Naive thymus-derived CD4-positive, alpha-beta T cell (primary cell): ENCODE measurements at regions of chr15 and their contacts with region 1.

Region 1: DNA sequence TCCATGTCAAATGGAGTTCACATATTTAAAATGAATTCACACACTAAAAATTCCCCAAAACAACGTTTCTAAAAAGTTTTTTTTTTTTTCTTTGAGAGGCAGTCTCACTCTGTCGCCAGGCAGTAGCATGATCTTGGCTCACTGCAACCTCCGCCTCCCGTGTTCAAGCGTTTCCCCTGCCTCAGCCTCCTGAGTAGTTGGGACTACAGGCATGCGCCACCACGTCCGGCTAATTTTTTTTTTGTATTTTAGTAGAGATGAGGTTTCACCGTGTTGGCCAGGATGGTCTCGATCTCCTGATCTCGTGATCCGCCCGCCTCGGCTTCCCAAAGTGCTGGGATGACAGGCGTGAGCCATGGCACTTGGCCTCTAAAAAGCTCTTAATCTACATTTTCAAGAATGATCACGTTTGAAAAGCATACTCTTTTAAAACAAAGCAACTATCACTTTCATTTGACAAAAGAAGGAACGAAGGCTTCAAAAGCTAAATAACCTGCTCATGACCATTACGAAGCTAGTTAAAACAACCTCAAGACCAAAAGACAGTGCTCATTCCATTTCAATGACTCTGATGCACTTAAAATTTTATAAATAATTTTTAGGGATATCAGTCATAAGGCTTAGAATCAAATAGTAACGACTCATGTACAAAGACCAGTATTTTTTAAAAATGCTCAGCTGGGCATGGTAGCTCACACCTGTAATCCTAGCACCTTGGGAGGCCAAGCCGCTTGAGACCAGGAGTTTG is 5.5 kb downstream of the UBE3A start:
- DNase-seq: no peak
- ATAC-seq: no peak
- H3K4me3 ChIP-seq: no peak overlapping the region
- H3K4me3 Mint-ChIP-seq: peak overlapping the region in 6 of 10 donors; percentile 4 to 60 (median 34)
- H3K27ac ChIP-seq: no peak overlapping the region
- H3K27ac Mint-ChIP-seq: peak overlapping the region in 2 of 9 donors; percentile 3 to 17
- H3K4me1 ChIP-seq: peaks cover 32 to 52% of the 10 kb centered on the region in 2 donors
- H3K4me1 Mint-ChIP-seq: peaks cover 42 to 94% (median 72%) of the 10 kb centered on the region in 7 donors
- H3K27me3 ChIP-seq: no peaks in the 10 kb centered on the region
- H3K27me3 Mint-ChIP-seq: no peaks in the 10 kb centered on the region

Region 2: DNA sequence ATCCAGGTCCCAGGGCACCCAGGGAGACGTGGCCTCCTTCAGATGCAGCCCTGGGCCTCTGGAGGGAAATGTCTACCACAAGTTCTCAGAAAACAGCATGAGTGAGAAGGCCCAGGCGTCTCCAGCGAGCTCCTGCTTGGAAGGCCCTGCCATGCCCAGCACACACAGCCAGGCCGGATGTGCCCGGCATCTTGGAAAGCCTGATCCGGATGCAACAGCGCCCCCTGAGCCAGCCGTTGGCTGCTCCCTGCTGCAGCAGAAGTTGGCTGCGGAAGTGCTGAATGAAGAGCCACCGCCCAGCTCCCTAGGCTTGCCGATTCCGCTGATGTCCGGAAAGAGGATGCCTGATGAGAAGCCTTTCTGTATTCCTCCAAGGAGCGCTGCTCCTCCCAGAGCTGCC is 756.9 kb before region 1 on chr15:
- CTCF ChIA-PET with region 1: no interaction called
- POLR2A ChIA-PET with region 1: no interaction called
- intact Hi-C with region 1: no loop called
- DNase-seq: no peak
- ATAC-seq: no peak
- H3K4me3 ChIP-seq: no peak overlapping the region
- H3K4me3 Mint-ChIP-seq: no peak overlapping the region
- H3K27ac ChIP-seq: no peak overlapping the region
- H3K27ac Mint-ChIP-seq: no peak overlapping the region
- H3K4me1 ChIP-seq: no peaks in the 10 kb centered on the region
- H3K4me1 Mint-ChIP-seq: no peaks in the 10 kb centered on the region
- H3K27me3 ChIP-seq: no peaks in the 10 kb centered on the region
- H3K27me3 Mint-ChIP-seq: peaks cover 0 to 9% (median 0%) of the 10 kb centered on the region in 5 donors

Region 3: GRCh38 chr15:25070357-25070963 is 362.8 kb before region 1 on chr15:
- CTCF ChIA-PET with region 1: no interaction called
- POLR2A ChIA-PET with region 1: no interaction called
- intact Hi-C with region 1: no loop called
- DNase-seq: no peak
- ATAC-seq: no peak
- H3K4me3 ChIP-seq: no peak overlapping the region
- H3K4me3 Mint-ChIP-seq: peak overlapping the region in 2 of 10 donors; percentile 25 to 33
- H3K27ac ChIP-seq: no peak overlapping the region
- H3K27ac Mint-ChIP-seq: no peak overlapping the region
- H3K4me1 ChIP-seq: no peaks in the 10 kb centered on the region
- H3K4me1 Mint-ChIP-seq: no peaks in the 10 kb centered on the region
- H3K27me3 ChIP-seq: no peaks in the 10 kb centered on the region
- H3K27me3 Mint-ChIP-seq: no peaks in the 10 kb centered on the region

Region 4: GRCh38 chr15:25415707-25416106 is 17.6 kb before region 1 on chr15:
- CTCF ChIA-PET with region 1: no interaction called
- POLR2A ChIA-PET with region 1: interaction called, 3 read pairs
- intact Hi-C with region 1: loop called in 1 of 2 experiments (anchors 2 kb)
- DNase-seq: no peak
- ATAC-seq: no peak
- H3K4me3 ChIP-seq: no peak overlapping the region
- H3K4me3 Mint-ChIP-seq: peak overlapping the region in 2 of 10 donors; percentile 48 to 63
- H3K27ac ChIP-seq: no peak overlapping the region
- H3K27ac Mint-ChIP-seq: no peak overlapping the region
- H3K4me1 ChIP-seq: peaks cover 11 to 14% of the 10 kb centered on the region in 2 donors
- H3K4me1 Mint-ChIP-seq: peaks cover 21 to 97% (median 85%) of the 10 kb centered on the region in 7 donors
- H3K27me3 ChIP-seq: no peaks in the 10 kb centered on the region
- H3K27me3 Mint-ChIP-seq: no peaks in the 10 kb centered on the region